AG04449 (cell line): ENCODE measurements at regions of chr7 and their contacts with region 1.

Region 1: DNA sequence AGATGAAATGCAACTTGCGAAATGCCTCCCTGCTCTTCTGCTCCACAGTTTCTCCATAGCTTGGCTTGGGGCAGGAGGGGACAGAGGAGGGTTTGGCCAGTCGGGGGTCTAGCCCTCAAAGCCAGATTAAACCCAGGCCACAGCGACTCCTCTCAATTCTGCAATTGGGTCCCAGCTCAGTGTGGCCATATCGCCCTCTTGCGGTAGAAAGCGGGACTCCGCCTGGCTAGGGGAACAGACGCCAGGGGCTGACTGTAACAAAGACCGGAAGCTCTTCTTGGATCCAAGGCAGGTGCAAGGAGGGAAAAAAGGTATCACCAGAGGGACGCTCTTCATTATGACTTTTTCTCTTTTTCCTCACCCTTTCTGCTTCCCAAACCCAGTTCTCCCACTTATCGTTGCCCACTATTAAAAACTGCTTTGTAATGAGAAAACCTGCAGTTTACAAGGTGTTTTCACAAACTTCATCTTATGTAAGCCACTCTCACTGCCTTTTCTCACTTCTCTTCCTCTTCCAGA is 36.6 kb upstream of the TNPO3 start:
- DNase-seq: no peak
- H3K4me3 ChIP-seq: no peak overlapping the region
- CTCF ChIP-seq: peak; percentile 99

Region 2: DNA sequence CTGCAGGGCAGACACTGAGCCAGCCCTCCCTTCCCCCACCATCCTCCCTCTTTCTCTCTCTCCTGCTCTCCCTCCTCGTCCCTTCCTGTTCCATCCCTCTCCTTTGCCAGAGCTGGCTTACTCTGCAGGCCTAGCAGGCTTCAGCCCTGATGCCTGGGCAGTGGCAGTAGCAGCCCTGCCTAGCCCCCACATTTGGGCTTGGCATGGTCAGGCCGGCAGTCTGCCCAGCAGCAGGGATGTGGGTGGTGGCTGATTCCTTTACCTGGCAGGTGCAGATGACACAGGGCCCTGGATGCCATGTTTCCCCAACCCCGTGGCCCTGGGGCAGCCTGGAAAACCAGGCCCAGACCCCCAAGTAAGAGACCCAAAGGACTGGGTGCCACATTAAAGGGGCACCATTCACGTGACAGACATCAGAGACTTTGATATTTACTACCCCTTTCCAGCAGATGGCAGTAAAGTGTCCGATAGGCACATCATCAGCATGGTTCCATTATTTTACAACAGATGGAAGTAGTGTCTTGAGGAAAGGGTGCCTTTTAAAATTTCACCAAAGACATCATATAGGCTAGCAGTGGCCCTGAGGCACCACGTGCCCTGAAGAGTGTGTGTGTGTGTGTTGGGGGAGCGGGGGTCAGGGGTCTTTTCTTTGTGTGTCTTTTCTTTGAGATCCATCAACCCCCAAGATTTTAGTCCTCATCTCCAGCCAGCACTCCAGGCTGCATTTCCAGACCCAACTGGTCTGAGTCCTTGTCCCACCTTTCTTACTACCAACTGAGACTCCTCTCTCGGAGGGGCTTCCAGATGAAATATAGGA is 187.0 kb before region 1 on chr7:
- CTCF ChIA-PET with region 1: interaction called, 136 read pairs
- POLR2A ChIA-PET with region 1: no interaction called
- DNase-seq: no peak
- H3K4me3 ChIP-seq: no peak overlapping the region
- CTCF ChIP-seq: peak; percentile 63

Region 3: GRCh38 chr7:129006636-129007414 is 84.7 kb before region 1 on chr7:
- CTCF ChIA-PET with region 1: interaction called, 12 read pairs
- POLR2A ChIA-PET with region 1: no interaction called
- DNase-seq: no peak
- H3K4me3 ChIP-seq: no peak overlapping the region
- CTCF ChIP-seq: no peak

Region 4: DNA sequence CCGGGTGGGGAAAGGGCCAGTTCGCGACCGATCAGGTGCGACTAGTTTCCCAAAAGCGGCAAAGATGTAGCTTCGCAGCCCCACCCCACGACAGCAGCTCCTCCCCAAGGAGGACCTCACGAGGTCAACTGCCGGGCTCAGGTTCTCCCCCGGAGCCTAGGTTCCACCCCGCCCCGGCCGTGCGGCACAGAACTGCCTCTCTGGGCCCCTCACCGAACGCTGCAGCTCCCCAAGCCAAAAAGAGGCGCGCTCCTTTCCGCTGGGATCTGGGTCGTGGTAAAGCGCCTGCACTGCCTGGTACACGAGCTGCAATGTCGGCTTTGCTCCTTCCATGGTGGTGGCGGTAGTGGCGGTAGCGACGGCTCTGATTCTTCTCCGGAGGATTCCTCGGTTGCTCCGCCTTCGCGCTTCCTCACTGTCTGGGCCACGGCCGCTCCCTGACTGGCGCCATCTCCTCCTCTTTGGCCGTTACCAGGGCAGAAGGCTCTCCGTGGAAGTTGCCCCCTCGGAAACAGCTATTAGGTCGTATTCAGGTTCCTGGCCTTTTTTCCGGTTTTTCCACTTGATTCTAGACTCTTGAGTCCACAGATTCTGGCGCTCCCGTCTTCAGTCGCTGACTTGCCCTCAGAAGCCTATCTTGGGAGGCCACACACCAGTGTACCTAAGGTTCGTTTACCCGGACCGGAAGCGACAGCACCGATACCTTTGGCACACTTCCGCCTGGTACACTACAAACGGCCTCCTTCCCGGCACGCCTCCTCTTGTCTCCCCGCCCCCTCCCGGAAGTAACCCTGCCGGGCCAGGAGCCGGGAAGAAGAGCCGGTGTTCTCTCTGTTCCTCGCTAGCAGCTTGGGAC is 36.9 kb before region 1 on chr7 and contains the start of gene TNPO3:
- CTCF ChIA-PET with region 1: interaction called, 10 read pairs
- POLR2A ChIA-PET with region 1: interaction called, 3 read pairs
- DNase-seq: peak; percentile 42
- H3K4me3 ChIP-seq: peak within 1 kb of the TSS; percentile 94
- CTCF ChIP-seq: no peak

Region 5: DNA sequence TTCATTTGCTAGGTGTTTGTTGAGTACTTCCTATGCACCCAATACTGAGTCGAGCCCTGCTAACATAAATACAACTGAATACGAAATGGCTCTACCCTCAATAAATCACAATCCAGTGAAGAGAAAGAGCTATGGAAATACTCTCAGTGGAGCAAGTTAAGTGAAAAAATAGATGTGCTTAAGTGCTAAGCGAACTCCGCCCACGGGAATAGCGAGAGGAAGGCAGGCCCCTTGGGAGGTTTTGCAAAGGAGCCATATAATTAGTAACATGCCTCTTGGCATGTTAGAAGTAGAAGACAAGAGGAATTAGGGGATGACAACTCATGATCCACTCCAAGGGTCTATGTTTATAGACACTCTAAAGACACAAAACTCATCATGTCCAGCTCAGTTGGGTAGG is 10.2 kb after region 1 on chr7:
- CTCF ChIA-PET with region 1: interaction called, 69 read pairs
- POLR2A ChIA-PET with region 1: no interaction called
- DNase-seq: no peak
- H3K4me3 ChIP-seq: no peak overlapping the region
- CTCF ChIP-seq: no peak

Region 6: DNA sequence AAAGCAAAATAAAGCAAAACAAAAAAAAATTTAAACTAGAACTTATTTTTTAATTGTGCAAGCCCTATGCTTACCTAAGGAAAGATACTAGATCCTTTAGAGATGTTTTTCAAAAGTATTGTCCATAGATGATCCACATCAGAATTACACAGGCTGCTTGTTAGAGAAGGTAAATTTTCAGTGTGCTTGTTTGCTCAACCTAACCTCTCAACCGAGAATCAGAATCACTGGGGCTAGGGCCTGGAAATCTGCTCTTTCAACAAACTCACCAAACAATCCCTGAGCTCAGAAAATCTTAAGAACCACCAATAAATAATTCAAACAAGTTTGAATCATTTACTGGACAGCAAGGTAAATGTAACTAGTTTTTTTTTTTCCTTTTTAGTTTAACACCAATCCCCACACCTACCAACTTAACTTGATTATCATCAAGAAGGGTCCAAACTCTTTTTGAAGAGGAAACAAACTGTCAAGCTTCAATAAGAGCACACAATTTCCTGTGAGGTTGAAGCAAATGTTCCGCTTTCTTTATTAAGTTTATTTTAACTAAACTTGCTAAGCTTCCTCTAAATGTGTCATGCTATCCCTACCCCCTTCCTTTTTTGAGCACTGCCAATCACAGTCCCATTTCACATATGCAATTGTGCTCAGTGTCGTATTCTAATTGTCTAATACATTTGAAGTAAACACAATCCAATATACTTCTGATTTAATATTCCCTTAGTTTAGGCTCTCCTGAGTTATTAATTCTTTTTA is 45.5 kb after region 1 on chr7:
- CTCF ChIA-PET with region 1: no interaction called
- POLR2A ChIA-PET with region 1: no interaction called
- DNase-seq: no peak
- H3K4me3 ChIP-seq: no peak overlapping the region
- CTCF ChIP-seq: no peak

Region 7: DNA sequence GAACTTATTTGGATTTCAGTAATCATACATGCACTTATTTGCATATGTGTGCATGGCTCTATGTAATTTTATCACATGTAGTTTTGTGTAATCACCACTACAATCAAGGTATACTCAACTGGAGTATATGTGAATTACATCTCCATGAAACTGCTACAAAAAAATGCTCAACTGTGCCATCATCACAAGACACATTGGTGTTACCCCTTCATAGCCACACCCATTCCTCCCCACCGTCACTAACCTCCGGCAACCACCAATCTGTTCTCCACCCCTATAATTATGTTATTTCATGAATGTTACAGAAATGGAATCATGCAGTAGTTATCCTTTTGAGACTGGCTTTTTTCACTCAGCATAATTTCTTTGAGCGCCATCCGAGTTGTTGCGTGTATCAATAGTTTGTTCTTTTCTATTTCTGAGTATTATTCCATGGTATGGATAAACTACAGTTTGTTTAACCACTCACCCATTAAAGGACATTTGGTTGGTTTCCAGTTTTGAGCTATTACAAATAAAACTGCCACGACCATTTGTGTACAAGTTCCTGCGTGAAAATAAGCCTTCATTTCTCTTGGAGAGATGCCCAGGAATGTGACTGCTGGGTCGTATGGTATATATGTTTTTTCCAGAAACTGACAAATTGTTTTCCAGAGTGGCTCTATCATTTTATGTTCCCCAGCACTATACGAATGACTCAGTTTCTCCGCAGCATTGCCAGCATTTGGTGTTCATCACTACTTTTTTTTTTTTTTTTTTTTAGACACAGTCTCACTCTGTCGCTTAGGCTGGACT is 85.6 kb after region 1 on chr7:
- CTCF ChIA-PET with region 1: no interaction called
- POLR2A ChIA-PET with region 1: no interaction called
- DNase-seq: no peak
- H3K4me3 ChIP-seq: no peak overlapping the region
- CTCF ChIP-seq: no peak

Region 8: DNA sequence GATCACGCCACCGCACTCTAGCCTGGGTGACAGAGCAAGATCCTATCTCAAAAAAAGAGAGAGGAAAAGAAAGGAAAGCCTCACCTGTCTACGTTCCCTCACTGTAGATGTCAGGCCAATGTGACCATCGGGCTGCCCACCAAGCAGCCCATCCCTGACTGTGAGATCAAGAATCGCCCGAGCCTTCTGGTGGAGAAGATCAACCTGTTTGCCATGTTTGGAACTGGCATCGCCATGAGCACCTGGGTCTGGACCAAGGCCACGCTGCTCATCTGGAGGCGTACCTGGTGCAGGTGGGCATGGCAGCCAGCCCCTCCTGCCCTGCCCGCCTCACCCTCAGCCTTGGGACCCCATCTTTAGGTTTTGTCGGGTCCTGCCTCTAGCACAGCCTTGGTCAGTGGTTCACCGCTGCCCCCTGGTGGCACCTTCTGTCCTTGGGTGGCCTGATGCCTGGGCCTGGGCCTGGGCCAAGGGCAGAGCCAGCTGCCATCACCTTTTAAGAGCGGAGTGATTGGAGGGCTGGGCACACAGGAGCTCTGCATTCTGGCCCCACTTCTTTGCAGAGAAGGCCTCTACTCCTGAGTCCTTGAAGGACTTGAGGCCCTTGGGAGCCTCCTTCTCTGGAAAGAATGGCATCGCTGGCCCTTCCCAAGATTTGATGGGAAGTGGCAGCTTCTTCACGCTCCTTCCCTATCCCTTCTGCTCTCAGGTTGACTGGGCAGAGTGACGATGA is 118.9 kb after region 1 on chr7:
- CTCF ChIA-PET with region 1: interaction called, 10 read pairs
- POLR2A ChIA-PET with region 1: no interaction called
- DNase-seq: no peak
- H3K4me3 ChIP-seq: no peak overlapping the region
- CTCF ChIP-seq: peak; percentile 93